CD8-positive, alpha-beta memory T cell (primary cell): ENCODE measurements at regions of chr2 and their contacts with region 1.

Region 1: DNA sequence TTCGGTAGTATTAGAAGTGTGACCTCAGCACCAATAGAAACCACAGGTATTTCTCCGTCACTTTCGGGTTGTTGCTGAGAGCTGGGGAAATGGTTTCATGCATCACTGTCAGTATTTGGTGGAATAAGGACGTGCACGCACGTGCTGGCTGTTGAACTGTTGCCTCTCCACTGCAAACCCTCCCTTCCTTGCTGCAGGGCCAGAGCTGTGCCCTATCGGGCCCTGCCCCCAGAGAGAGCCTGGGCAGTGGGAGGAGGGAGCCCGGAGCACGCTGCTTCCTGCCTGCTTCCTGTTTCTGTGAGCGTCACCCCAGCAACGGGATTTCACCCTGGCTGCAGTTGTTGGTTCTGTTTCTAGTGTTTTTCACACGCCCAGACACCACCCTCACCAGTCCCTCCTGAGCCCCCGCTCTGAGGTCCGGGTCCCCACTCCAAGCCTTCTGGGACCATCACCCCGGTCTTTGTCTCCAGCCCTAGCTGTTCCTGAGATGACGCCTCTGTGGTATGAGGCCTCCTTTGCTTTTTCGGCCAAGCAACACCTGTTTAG is 47.4 kb downstream of the LRRFIP1 start:
- DNase-seq: peak; percentile 81 to 95 (median 92)
- H3K4me3 ChIP-seq: peak overlapping the region; percentile 70
- H3K4me3 Mint-ChIP-seq: peak overlapping the region; percentile 68 to 95 (median 91)
- H3K27ac ChIP-seq: peak overlapping the region; percentile 96
- H3K27ac Mint-ChIP-seq: peak overlapping the region; percentile 95 to 100 (median 100)
- H3K4me1 ChIP-seq: peaks cover 41% of the 10 kb centered on the region
- H3K4me1 Mint-ChIP-seq: peaks cover 45 to 51% (median 47%) of the 10 kb centered on the region in 3 donors
- H3K27me3 ChIP-seq: no peaks in the 10 kb centered on the region
- H3K27me3 Mint-ChIP-seq: peaks cover 0 to 6% of the 10 kb centered on the region in 2 donors

Region 2: GRCh38 chr2:237660380-237660904 is 14.4 kb before region 1 on chr2:
- CTCF ChIA-PET with region 1: interaction called, 10 read pairs
- POLR2A ChIA-PET with region 1: no interaction called
- DNase-seq: no peak
- H3K4me3 ChIP-seq: no peak overlapping the region
- H3K4me3 Mint-ChIP-seq: no peak overlapping the region
- H3K27ac ChIP-seq: no peak overlapping the region
- H3K27ac Mint-ChIP-seq: no peak overlapping the region
- H3K4me1 ChIP-seq: no peaks in the 10 kb centered on the region
- H3K4me1 Mint-ChIP-seq: peaks cover 4 to 9% (median 7%) of the 10 kb centered on the region in 3 donors
- H3K27me3 ChIP-seq: peaks cover 4% of the 10 kb centered on the region
- H3K27me3 Mint-ChIP-seq: peaks cover 12 to 48% of the 10 kb centered on the region in 2 donors

Region 3: DNA sequence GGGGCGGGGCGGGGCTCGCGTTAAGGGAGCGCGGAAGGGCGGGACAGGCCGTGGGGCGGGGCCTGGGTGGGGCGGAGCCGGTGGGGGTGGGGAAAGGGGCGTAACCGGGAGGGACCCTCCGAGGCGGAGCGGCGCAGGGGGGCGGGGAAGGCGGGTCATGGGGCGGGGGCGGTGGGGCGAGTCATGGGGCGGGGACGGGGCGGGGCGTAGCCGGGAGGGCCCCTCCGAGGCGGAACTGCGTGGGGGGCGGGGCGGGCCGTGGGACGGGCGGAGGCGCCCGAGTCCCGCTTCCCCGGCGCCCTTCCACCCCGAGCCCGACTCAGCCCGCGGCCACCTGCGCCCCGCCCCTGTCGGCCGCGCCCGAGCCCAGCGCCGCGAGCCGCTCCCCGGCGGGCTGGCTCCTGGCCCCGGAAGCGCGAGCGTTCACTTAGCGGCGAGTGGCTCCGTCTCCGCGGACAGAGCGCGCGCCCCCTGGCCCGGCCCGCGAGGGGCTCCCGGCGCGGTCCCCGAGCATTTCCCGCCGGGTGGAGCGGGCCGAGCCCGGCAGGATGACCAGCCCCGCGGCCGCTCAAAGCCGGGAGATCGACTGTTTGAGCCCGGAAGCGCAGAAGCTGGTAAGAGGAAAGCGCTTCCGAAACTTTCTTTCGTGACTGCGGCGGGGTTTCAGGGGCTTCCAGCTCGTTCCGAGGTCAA is 17.2 kb after region 1 on chr2:
- CTCF ChIA-PET with region 1: interaction called, 295 read pairs
- POLR2A ChIA-PET with region 1: interaction called, 56 read pairs
- DNase-seq: peak; percentile 90 to 98 (median 94)
- H3K4me3 ChIP-seq: peak overlapping the region; percentile 79
- H3K4me3 Mint-ChIP-seq: peak overlapping the region; percentile 87 to 96 (median 92)
- H3K27ac ChIP-seq: peak overlapping the region; percentile 94
- H3K27ac Mint-ChIP-seq: peak overlapping the region; percentile 90 to 98 (median 96)
- H3K4me1 ChIP-seq: peaks cover 77% of the 10 kb centered on the region
- H3K4me1 Mint-ChIP-seq: peaks cover 75 to 82% (median 81%) of the 10 kb centered on the region in 3 donors
- H3K27me3 ChIP-seq: no peaks in the 10 kb centered on the region
- H3K27me3 Mint-ChIP-seq: no peaks in the 10 kb centered on the region

Region 4: DNA sequence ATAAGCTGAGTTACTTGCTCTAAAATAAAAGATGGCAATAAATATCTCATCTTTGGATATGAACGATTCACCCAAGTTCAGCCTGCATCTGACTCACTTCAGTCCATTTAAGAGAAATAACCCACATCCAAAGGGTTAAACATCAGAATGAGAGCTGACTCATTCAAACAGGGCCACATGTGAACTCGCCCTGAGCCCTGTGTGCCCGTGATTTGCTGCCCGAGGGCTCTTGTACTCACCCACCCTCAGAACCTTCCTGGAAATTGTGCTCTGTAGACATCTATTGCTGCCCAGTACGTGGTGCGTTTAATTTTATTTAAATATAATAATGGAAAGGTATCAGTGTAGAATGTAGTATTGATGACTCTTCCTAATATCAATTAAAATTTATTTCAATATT is 56.9 kb after region 1 on chr2:
- CTCF ChIA-PET with region 1: interaction called, 67 read pairs
- POLR2A ChIA-PET with region 1: no interaction called
- DNase-seq: no peak
- H3K4me3 ChIP-seq: no peak overlapping the region
- H3K4me3 Mint-ChIP-seq: peak overlapping the region in 5 of 7 donors; percentile 28 to 82 (median 50)
- H3K27ac ChIP-seq: no peak overlapping the region
- H3K27ac Mint-ChIP-seq: peak overlapping the region in 7 of 8 donors; percentile 43 to 88 (median 78)
- H3K4me1 ChIP-seq: peaks cover 34% of the 10 kb centered on the region
- H3K4me1 Mint-ChIP-seq: peaks cover 65 to 87% (median 79%) of the 10 kb centered on the region in 3 donors
- H3K27me3 ChIP-seq: no peaks in the 10 kb centered on the region
- H3K27me3 Mint-ChIP-seq: peaks cover 0 to 1% of the 10 kb centered on the region in 2 donors

Region 5: GRCh38 chr2:237752761-237753165 is 78.0 kb after region 1 on chr2:
- CTCF ChIA-PET with region 1: interaction called, 268 read pairs
- POLR2A ChIA-PET with region 1: interaction called, 3 read pairs
- DNase-seq: no peak
- H3K4me3 ChIP-seq: no peak overlapping the region
- H3K4me3 Mint-ChIP-seq: no peak overlapping the region
- H3K27ac ChIP-seq: no peak overlapping the region
- H3K27ac Mint-ChIP-seq: peak overlapping the region in 7 of 8 donors; percentile 18 to 83 (median 71)
- H3K4me1 ChIP-seq: no peaks in the 10 kb centered on the region
- H3K4me1 Mint-ChIP-seq: peaks cover 17 to 27% (median 26%) of the 10 kb centered on the region in 3 donors
- H3K27me3 ChIP-seq: no peaks in the 10 kb centered on the region
- H3K27me3 Mint-ChIP-seq: no peaks in the 10 kb centered on the region

Region 6: DNA sequence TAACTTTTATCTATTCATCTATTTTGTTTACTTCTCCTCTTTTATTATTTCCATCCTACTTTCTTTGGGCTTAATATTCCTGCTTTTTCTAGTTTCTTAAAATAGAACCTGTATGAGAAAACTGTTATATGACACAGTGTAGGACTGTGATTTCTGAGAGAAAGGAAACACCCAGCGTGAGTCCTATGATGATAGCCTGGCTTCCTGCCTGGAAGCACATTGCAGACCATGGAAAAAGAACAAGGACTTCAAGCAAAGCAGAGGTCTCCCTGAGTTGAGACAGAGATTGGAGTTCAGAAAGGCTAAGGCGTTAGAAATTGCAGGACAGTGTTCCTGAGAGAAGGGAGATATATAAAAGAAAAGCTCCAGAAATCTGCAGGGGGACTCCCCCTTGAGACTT is 131.5 kb after region 1 on chr2:
- CTCF ChIA-PET with region 1: no interaction called
- POLR2A ChIA-PET with region 1: no interaction called
- DNase-seq: no peak
- H3K4me3 ChIP-seq: no peak overlapping the region
- H3K4me3 Mint-ChIP-seq: no peak overlapping the region
- H3K27ac ChIP-seq: no peak overlapping the region
- H3K27ac Mint-ChIP-seq: no peak overlapping the region
- H3K4me1 ChIP-seq: no peaks in the 10 kb centered on the region
- H3K4me1 Mint-ChIP-seq: no peaks in the 10 kb centered on the region
- H3K27me3 ChIP-seq: peaks cover 5% of the 10 kb centered on the region
- H3K27me3 Mint-ChIP-seq: peaks cover 0 to 6% of the 10 kb centered on the region in 2 donors